Calu3 (cell line): ENCODE measurements at regions of chrX and their contacts with region 1.

Region 1: DNA sequence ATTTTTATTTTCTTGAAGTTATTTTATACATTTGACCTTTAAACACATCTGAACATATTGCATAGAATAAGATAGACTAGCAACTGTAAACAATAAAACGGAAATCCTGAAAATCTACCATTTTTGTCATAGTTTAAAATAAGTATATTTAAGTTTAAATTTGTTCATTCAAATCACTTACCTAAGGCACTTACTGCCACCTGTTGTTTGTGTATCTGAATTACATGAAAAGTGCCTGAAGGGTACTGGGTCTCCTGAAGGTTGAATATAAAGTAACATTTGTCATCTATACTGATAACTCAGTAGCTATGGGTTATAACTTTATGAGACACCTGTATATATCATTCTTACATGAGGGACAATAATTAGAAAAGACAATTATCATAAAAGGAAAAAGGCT is 38.6 kb downstream of the TRPC5 start:
- DNase-seq: peak; percentile 5
- H3K4me3 Mint-ChIP-seq: no peak overlapping the region
- H3K27ac Mint-ChIP-seq: no peak overlapping the region
- H3K4me1 Mint-ChIP-seq: no peaks in the 10 kb centered on the region
- H3K27me3 Mint-ChIP-seq: no peaks in the 10 kb centered on the region
- CTCF ChIP-seq: no peak

Region 2: GRCh38 chrX:111719426-111720210 is 324.4 kb before region 1 on chrX:
- CTCF ChIA-PET with region 1: interaction called, 4 read pairs
- intact Hi-C with region 1: loop called (anchors 5 kb)
- DNase-seq: no peak
- H3K4me3 Mint-ChIP-seq: no peak overlapping the region
- H3K27ac Mint-ChIP-seq: no peak overlapping the region
- H3K4me1 Mint-ChIP-seq: no peaks in the 10 kb centered on the region
- H3K27me3 Mint-ChIP-seq: no peaks in the 10 kb centered on the region
- CTCF ChIP-seq: no peak

Region 3: DNA sequence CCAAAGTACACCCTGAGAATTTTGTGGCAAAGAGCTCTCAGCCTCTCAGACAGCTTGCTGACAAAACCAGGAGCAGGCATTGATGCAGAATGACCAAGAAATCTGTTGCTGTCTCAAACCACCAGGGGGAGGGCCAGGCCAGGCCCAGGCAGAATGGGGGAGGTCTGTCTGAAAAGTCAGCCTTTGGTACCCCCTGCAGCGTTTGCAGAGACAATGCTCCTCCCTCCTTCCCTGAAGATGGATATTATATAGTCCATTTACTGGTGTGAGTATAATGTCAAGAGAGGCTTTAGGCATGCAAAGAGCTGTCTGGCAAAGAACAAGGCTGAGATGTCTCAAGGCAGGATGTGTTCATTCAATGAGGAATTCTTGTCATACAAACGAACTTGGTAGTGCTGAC is 220.9 kb before region 1 on chrX:
- CTCF ChIA-PET with region 1: interaction called, 9 read pairs
- intact Hi-C with region 1: loop called (anchors 1 kb)
- DNase-seq: peak; percentile 56
- H3K4me3 Mint-ChIP-seq: no peak overlapping the region
- H3K27ac Mint-ChIP-seq: no peak overlapping the region
- H3K4me1 Mint-ChIP-seq: peaks cover 18% of the 10 kb centered on the region
- H3K27me3 Mint-ChIP-seq: no peaks in the 10 kb centered on the region
- CTCF ChIP-seq: peak; percentile 64